ENCODE measurements at regions of chr15 and their contacts with region 1.

Region 1: GRCh38 chr15:49031764-49032270 is 14.4 kb downstream of the SECISBP2L start:
- DNase-seq: no peak
- H3K4me3 ChIP-seq: no peak overlapping the region
- H3K27ac ChIP-seq: no peak overlapping the region
- H3K4me1 ChIP-seq: peaks cover 3% of the 10 kb centered on the region
- H3K27me3 ChIP-seq: no peaks in the 10 kb centered on the region
- CTCF ChIP-seq: no peak

Region 2: GRCh38 chr15:48914717-48915116 is 117.1 kb before region 1 on chr15:
- dilution Hi-C with region 1: no loop called
- DNase-seq: no peak
- H3K4me3 ChIP-seq: no peak overlapping the region
- H3K27ac ChIP-seq: no peak overlapping the region
- H3K4me1 ChIP-seq: peaks cover 3% of the 10 kb centered on the region
- H3K27me3 ChIP-seq: peaks cover 4% of the 10 kb centered on the region
- CTCF ChIP-seq: no peak

Region 3: DNA sequence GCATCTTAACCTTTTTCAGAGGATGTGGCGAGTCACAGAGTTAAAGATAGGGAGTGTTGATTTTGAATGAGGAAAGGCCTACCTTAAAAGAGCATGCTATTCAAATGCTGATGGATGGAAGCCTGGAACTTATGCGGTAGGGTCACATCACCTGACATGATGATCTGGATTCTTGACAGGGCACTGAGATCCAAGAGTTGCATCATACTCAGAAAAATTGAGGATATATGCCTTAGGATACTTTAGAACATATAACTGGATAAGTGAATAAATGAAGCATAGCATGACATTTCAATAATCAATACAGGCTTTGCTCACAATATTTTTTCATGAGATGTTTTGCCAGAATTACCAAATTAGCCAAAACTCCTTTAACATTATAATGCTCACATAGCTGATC is 34.6 kb after region 1 on chr15:
- dilution Hi-C with region 1: loop called (anchors 5 kb)
- DNase-seq: no peak
- H3K4me3 ChIP-seq: no peak overlapping the region
- H3K27ac ChIP-seq: no peak overlapping the region
- H3K4me1 ChIP-seq: no peaks in the 10 kb centered on the region
- H3K27me3 ChIP-seq: no peaks in the 10 kb centered on the region
- CTCF ChIP-seq: no peak